ENCODE measurements at regions of chr4 and their contacts with region 1.

Region 1: DNA sequence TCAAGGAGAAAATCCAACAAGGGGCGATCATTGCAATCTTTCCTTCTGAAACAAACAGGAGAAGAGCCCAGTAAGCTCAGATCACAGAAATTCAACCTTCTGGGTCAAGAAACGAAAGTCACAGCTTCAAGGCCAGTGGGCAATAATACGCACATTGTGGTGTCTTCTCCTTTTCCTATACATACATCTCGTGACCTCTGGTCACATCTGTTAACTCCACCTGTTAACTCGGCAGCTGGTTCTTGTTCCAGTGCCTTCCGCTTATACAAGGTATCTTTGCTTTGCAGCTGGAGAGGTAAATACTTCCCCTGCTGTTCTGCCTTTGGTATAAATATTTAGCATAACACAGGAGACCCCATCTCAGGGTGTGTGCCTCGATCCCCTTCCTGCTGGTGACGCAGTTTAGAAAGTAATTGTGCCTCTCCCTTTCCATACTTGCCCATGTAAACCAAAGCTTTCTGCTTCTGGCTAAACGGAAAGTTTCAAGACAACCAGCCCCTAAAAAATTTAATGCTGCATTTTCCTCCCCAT is 45.0 kb downstream of the CCDC149 start:
- DNase-seq: no peak
- ATAC-seq: no peak

Region 2: DNA sequence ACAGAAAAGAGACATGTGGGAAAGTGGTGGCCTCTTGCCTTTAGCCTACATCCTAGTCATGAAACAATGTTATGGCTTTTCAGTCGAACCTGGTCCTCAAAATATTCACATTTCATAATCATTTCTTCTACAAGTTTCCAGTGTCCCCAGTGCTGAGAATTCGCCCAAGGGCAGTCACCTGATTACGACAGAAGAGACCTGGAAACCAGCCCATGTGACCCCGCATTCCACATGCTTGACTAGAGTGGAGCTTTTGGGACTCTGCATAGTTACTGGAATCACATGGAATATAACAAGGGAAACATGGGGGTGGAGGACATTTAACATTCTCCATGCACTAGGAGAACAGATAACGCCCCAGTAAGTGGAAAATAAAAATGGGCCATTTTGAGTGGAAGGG is 1078.1 kb before region 1 on chr4:
- intact Hi-C with region 1: no loop called
- DNase-seq: peak; percentile 64
- ATAC-seq: peak; percentile 79

Region 3: DNA sequence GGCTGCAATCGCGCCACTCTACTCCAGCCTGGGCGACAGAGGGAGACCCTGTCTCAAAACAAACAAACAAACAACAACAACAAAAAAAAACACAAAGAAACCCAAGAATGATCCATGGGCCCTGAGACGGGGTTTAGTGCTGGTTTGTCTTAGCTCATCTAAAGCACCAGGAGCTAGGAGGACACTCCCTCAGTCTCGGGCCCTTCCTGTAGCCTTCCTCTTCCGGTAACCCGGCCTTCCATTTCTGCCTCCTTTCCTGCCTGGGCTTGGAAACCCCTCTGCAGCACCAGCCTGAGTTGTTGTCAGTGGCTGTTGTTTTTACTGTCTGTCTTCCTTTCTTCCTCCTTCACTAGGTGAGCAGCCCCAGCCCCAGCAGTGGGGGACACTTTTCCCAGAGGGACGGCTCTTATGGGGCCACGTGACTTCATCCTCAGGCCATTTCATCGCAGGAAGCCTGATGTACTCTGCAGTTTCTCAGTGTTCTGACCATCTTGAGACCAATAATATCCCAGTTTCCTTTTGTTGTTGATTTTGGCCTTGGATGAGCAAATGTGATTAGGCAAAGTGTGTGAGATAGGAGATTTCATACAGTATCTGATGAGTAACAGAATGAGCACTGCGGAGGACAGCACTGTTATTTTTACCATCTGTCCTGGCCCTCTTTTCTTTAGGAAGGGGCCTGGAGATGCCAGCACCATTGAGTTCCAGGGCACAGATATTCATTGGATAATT is 599.3 kb after region 1 on chr4:
- intact Hi-C with region 1: no loop called
- DNase-seq: no peak
- ATAC-seq: peak; percentile 45

Region 4: GRCh38 chr4:25723409-25723808 is 855.6 kb after region 1 on chr4:
- intact Hi-C with region 1: loop called (anchors 5 kb)
- DNase-seq: no peak
- ATAC-seq: no peak

Measured in sciatic nerve (tissue), 2 donors.